Posterior cingulate gyrus (tissue), 11 donors: ENCODE measurements at regions of chr16 and their contacts with region 1.

Region 1: DNA sequence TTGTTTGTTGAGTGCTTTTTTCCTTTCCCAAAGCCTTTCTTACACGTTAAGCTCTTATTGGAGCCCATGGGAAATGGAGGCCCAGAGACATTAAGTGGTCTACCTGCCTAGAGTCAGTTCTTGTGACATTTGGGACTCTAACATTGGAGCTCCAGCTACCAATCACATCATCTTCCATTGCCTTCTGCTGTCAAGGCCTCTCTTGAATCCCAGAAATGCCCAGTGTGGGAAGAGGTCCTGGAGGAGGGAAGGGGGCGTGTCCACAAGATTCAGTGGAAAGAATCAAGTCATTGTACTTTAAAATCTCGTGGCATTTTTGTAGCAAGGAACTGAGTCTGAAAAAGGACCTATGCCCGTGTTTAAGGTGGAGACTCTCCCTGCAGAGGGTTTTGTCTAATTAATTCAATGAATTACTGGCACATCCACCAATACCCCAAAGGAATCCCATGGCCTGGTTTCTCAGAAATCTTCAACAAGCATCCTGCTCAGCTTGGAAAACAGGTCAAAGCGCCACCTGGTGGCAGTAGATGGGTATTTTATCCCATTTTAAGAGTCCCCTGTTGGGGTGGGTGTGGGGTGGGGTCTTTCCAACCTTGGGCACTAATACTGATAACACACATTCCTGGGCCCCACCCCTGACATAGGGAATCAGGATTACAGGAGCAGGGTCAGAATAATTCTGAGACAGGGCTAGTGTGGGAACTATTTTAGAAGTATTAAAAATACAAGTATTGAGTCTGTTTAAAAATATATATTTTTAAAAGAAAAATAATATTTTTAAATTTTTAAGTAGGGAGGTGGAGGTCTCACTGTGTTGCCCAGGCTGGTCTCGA is 24.6 kb downstream of the GPT2 start:
- DNase-seq: peak in 4 of 10 donors; percentile 41 to 63 (median 52)

Region 2: GRCh38 chr16:46853713-46854443 is 54.9 kb before region 1 on chr16:
- intact Hi-C with region 1: loop called (anchors 1 kb)
- DNase-seq: peak; percentile 78 to 98 (median 90)

Region 3: DNA sequence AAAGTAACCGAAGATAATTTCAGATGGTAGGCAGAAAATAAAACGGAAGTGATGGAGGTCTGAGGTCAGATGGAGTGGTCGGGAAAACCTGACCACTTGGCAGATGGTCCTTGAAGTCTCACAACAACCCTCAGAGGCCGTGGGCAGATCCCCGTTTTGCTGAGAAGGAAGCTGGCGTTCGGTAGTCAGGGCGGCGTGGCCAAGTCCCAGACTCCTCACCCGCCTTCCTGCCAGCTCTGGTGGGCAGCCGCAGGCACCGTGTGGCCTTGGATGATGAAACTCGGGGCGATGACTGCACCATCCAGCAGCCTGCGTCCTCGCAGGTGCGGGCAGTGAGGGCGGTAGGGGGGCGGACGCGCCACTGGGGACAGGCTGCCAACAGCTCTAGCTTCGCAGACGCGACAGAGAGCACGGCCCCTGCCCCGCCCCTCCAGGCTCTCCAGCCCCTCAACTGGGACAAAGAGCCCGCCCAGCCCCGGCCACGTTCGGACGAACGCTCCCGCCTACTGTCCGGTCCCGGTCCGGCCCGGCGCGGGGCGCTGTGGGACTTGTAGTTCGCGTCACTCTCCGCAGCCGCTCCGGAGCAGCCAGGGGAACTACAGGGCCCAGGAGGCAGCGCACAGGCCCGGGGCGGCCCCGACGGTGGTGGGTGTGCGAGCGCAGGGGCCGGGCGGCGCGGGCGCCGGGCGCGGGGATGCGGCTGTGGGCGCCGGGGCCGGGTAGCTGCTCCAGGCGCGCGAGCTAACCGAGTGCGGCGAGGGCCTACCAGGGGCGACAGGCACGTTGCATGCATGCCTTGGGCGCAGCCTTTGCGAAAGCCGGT is 24.9 kb before region 1 on chr16 and contains the start of gene GPT2:
- intact Hi-C with region 1: loop called (anchors 1 kb)
- DNase-seq: peak; percentile 96 to 100 (median 99)

Region 4: GRCh38 chr16:46929378-46930332 is 20.9 kb after region 1 on chr16:
- intact Hi-C with region 1: loop called (anchors 1 kb)
- DNase-seq: peak; percentile 67 to 97 (median 86)